Pancreas (tissue), 10 donors: ENCODE measurements at regions of chr2 and their contacts with region 1.

Region 1: GRCh38 chr2:223993621-223994232 is 36.5 kb downstream of the MRPL44 start:
- DNase-seq: peak in 4 of 6 donors; percentile 28 to 65 (median 40)
- ATAC-seq: peak; percentile 81 to 91 (median 86)
- H3K4me3 ChIP-seq: no peak overlapping the region
- H3K27ac ChIP-seq: no peak overlapping the region
- H3K4me1 ChIP-seq: no peaks in the 10 kb centered on the region
- H3K27me3 ChIP-seq: no peaks in the 10 kb centered on the region
- CTCF ChIP-seq: peak; percentile 72 to 75 (median 74)

Region 2: DNA sequence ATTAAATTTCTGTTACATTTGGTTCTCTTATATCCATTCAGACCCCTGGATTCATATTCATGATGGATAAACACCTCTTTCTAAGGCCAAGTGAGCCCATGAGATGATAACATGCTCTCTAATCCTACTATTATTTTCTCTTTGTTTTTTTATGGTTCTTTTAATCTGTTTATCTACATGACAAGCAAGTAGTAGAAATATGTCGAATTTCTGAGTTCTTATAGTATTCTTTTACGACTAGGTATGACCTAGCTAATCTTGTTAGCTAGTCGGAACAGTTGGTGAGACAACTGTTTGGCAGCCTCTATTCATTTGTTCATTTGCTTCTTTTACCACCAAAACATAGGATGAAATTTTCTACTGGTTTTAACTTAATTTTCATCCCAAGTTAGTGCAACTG is 293.5 kb before region 1 on chr2:
- intact Hi-C with region 1: no loop called
- DNase-seq: no peak
- ATAC-seq: no peak
- H3K4me3 ChIP-seq: no peak overlapping the region
- H3K27ac ChIP-seq: no peak overlapping the region
- H3K4me1 ChIP-seq: no peaks in the 10 kb centered on the region
- H3K27me3 ChIP-seq: no peaks in the 10 kb centered on the region
- CTCF ChIP-seq: no peak

Region 3: DNA sequence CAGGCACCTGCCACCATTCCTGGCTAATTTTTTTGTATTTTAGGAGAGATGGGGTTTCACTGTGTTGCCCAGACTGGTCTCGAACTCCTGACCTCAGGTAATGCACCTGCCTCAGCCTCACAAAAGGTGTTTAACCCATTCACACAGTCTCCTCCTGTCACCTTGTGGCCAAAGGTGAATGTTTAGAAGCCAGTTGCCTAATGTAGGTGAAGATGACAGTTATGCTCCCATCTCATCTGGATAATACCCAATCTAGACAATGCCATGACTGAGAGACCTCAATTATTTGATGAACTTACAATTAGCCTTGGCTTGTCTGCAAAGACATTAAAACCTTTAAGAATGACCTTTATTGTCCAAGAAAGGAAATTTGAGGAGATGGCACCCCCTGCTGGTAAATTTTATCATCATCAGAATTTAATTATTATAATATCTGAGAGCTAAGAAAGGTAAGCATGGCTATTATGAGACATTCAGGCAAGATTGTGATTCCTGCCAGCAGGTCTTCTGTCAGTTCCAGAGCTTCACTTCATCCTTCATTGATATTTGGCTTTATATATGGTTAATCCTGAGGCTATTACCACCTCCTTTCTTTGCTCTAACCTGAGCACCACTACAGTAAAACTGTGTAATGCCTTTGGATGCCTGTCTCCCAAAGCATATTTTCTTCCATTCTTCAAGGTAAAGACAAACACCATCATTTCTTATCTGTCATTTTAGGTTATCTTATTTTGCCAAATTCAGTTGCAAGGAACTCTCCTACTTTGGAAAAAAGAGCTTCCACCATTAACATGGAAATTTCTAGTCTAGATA is 290.6 kb after region 1 on chr2:
- intact Hi-C with region 1: loop called in 2 of 3 experiments (anchors 5 kb)
- DNase-seq: peak in 1 of 6 donors; percentile 13
- ATAC-seq: peak; percentile 43 to 75 (median 71)
- H3K4me3 ChIP-seq: no peak overlapping the region
- H3K27ac ChIP-seq: no peak overlapping the region
- H3K4me1 ChIP-seq: no peaks in the 10 kb centered on the region
- H3K27me3 ChIP-seq: no peaks in the 10 kb centered on the region
- CTCF ChIP-seq: peak; percentile 29 to 62 (median 43)

Region 4: GRCh38 chr2:224293976-224294375 is 300.2 kb after region 1 on chr2:
- intact Hi-C with region 1: loop called in 1 of 3 experiments (anchors 10 kb)
- DNase-seq: no peak
- ATAC-seq: no peak
- H3K4me3 ChIP-seq: no peak overlapping the region
- H3K27ac ChIP-seq: no peak overlapping the region
- H3K4me1 ChIP-seq: no peaks in the 10 kb centered on the region
- H3K27me3 ChIP-seq: no peaks in the 10 kb centered on the region
- CTCF ChIP-seq: no peak